OCI-LY7 (cell line): ENCODE measurements at regions of chr1 and their contacts with region 1.

Region 1: GRCh38 chr1:108559215-108560186 is at the start of gene EEIG2:
- DNase-seq: peak; percentile 96
- H3K4me3 ChIP-seq: peak within 1 kb of the TSS; percentile 72
- H3K27ac ChIP-seq: peak within 1 kb of the TSS; percentile 91
- H3K4me1 ChIP-seq: peaks cover 56% of the 10 kb centered on the region
- CTCF ChIP-seq: peak; percentile 75
- total RNA-seq, gene EEIG2: 21.3 and 24.7 TPM in 2 replicates

Region 2: GRCh38 chr1:107963601-107964335 is 595.7 kb before region 1 on chr1:
- CTCF ChIA-PET with region 1: no interaction called
- POLR2A ChIA-PET with region 1: no interaction called
- intact Hi-C with region 1: loop called (anchors 10 kb)
- DNase-seq: peak; percentile 70
- H3K4me3 ChIP-seq: peak overlapping the region; percentile 73
- H3K27ac ChIP-seq: peak overlapping the region; percentile 25
- H3K4me1 ChIP-seq: peaks cover 11% of the 10 kb centered on the region
- CTCF ChIP-seq: no peak

Region 3: DNA sequence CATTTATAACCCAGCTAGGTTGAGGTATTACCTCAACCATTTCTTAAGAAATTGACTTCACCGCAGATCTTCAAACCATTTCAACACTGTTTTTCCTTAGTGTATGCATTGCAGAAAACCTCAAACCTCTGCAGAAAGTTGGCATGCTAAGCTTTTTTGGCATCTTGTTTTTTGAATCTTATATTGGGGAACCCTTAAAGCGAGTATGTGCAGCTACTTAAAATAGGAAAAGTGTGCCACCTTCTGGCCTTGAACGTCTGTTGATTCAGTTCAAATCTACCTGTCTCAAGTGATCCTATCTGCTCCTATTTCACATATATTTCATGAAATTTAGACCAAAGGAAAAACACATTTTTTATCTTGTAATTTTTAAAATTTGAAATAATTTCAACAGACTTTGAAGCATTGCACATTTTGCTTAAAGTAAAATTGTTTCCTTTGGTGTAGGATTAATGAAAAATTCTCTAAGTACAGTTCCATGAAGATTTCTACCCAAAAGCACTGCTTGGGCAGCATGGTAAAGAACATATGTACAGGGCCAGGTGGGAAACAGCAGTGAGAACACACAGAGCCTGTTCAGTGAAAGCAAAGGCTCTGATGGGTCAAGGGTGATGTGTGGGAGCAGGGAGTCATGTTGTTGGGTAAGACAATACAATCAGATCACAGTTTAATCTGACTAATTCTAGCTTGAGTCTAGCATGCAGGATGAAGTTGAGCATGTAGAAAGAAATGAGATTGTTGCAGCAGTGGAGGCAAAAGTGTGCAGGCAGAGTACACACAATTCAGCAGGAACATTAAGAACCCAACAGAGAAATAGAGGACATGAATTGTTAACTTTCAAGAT is 84.2 kb after region 1 on chr1:
- CTCF ChIA-PET with region 1: no interaction called
- POLR2A ChIA-PET with region 1: interaction called, 4 read pairs
- intact Hi-C with region 1: loop called (anchors 1 kb)
- DNase-seq: peak; percentile 69
- H3K4me3 ChIP-seq: no peak overlapping the region
- H3K27ac ChIP-seq: no peak overlapping the region
- H3K4me1 ChIP-seq: no peaks in the 10 kb centered on the region
- CTCF ChIP-seq: peak; percentile 90

Region 4: GRCh38 chr1:108708691-108709660 is 149.5 kb after region 1 on chr1:
- CTCF ChIA-PET with region 1: no interaction called
- POLR2A ChIA-PET with region 1: no interaction called
- intact Hi-C with region 1: no loop called
- DNase-seq: peak; percentile 38
- H3K4me3 ChIP-seq: no peak overlapping the region
- H3K27ac ChIP-seq: no peak overlapping the region
- H3K4me1 ChIP-seq: no peaks in the 10 kb centered on the region
- CTCF ChIP-seq: peak; percentile 73

Region 5: GRCh38 chr1:108746372-108747205 is 187.1 kb after region 1 on chr1 and contains the start of gene STXBP3:
- CTCF ChIA-PET with region 1: no interaction called
- POLR2A ChIA-PET with region 1: no interaction called
- intact Hi-C with region 1: loop called (anchors 2 kb)
- DNase-seq: peak; percentile 99
- H3K4me3 ChIP-seq: peak within 1 kb of the TSS; percentile 88
- H3K27ac ChIP-seq: peak within 1 kb of the TSS; percentile 56
- H3K4me1 ChIP-seq: peaks cover 3% of the 10 kb centered on the region
- CTCF ChIP-seq: peak; percentile 93
- total RNA-seq, gene STXBP3: 27.7 and 28.3 TPM in 2 replicates